Left cardiac atrium (tissue), 4 donors: ENCODE measurements at regions of chr17 and their contacts with region 1.

Region 1: DNA sequence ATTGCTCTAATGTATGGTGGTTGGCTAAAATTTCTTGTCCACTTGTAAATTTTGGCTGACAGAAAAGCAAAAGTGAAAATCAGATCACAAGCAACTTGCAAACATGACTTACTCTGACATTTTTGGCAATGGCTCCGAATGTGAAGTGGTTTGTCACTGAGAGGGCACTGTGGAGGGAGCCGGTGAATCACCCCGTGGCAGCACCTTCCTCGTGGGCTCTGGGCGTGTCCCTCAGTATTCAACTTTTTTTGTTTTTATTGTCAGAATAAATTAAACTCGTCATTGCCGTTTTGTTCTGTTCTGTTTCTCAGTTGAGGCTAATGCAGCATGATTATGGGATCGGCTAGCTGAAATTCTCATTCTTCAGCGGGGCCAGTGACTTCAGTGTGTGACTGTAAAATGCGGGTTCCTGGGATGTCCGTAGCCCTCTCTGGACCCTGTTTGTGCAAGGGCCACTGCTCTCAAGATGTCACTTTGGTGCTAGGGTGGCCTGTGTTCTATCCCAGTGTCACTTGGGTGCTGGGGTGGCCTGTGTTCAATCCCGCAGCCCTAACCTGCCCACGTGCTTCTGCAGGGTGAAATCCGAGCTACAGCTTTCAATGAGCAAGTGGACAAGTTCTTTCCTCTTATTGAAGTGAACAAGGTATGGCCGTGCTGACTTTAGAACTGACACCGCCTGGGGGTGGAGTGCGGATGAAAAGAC is 48.8 kb downstream of the RPA1 start:
- DNase-seq: peak; percentile 37
- ATAC-seq: peak; percentile 52 to 81

Region 2: GRCh38 chr17:1724506-1725362 is 153.8 kb before region 1 on chr17 and contains the start of gene WDR81:
- intact Hi-C with region 1: loop called in 1 of 2 experiments (anchors 5 kb)
- DNase-seq: peak; percentile 97
- ATAC-seq: peak; percentile 85 to 92
- total RNA-seq, gene WDR81: 15.4 to 16.1 TPM